Ascending aorta (tissue), 2 donors: ENCODE measurements at regions of chr11 and their contacts with region 1.

Region 1: DNA sequence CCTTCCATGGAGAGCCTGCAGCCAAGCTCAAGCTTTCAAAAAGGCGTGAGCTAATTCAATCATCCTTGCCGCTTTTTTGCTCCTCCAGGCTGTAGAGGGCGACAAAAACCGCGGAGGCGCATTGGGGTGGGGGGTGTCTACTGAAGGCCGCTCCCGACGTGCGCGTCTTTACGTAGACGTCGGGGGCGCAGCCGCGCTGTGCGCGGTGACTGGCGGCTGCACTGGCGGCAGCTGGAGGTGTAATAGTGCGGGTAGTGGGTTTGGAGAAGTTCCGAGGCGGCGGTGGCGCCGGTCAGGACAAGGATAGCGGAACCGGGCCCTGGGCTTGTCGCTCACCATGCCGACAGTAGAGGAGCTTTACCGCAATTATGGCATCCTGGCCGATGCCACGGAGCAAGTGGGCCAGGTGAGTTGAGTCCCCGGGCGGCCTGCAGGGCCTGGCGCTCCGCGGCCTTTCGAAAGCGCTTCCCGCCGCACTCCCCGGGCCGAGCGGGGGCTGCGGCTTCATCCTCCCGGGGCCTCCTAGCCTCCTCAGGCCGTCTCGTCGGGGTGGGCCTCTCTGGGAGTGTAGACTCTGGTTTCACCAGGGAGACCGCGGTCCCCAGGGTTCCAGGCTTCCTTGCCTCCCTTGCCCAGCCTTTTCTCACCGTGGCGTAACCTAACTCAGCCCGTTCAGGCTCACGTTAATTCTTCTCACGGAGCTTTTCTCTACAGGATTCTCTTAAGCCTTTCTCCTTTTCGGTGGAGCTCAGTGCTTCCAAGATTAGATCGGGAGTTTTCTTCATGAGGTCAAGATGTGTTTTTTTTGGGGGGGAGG is at the start of gene API5:
- DNase-seq: peak; percentile 75 to 92
- H3K4me3 ChIP-seq: peak within 1 kb of the TSS; percentile 81 to 97
- H3K27ac ChIP-seq: peak within 1 kb of the TSS; percentile 87 to 90
- H3K4me1 ChIP-seq: peaks cover 0 to 10% of the 10 kb centered on the region in 2 donors
- H3K27me3 ChIP-seq: no peaks in the 10 kb centered on the region
- CTCF ChIP-seq: peak; percentile 52 to 85 (median 75)
- total RNA-seq, gene API5: 21.0 TPM

Region 2: DNA sequence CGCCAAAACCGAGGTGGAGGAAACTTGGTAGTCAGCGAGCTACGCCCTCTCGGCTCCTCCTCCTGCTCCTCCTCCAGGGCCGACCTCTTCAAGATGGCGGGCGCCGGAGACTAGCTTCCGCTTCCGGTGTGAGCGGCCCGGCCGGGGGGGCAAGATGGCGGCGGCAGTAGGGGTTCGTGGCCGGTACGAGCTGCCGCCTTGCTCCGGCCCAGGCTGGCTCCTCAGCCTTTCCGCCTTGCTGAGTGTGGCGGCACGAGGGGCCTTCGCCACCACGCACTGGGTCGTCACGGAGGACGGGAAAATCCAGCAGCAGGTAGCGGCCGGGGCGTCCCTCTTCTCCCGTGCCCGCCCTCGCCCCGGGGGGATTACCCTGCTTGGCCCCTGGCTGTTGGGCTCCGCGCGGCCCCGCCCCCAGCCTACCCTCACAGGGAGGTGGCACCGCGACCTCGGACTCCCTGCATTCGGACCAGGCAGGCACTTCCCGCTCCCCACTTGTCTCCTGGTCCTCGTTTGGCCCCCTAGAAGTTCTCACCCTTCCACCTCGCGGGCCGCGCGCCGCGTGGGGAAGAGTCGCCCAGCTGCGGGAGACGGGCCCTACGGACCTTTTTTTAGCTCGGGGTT is 46.9 kb after region 1 on chr11 and contains the start of gene TTC17:
- intact Hi-C with region 1: loop called (anchors 2 kb)
- DNase-seq: peak; percentile 72 to 97
- H3K4me3 ChIP-seq: peak within 1 kb of the TSS; percentile 92 to 100
- H3K27ac ChIP-seq: peak within 1 kb of the TSS; percentile 92 to 94
- H3K4me1 ChIP-seq: peaks cover 6 to 13% of the 10 kb centered on the region in 2 donors
- H3K27me3 ChIP-seq: no peaks in the 10 kb centered on the region
- CTCF ChIP-seq: no peak
- total RNA-seq, gene TTC17: 60.3 TPM